ENCODE measurements at regions of chr6 and their contacts with region 1.

Region 1: DNA sequence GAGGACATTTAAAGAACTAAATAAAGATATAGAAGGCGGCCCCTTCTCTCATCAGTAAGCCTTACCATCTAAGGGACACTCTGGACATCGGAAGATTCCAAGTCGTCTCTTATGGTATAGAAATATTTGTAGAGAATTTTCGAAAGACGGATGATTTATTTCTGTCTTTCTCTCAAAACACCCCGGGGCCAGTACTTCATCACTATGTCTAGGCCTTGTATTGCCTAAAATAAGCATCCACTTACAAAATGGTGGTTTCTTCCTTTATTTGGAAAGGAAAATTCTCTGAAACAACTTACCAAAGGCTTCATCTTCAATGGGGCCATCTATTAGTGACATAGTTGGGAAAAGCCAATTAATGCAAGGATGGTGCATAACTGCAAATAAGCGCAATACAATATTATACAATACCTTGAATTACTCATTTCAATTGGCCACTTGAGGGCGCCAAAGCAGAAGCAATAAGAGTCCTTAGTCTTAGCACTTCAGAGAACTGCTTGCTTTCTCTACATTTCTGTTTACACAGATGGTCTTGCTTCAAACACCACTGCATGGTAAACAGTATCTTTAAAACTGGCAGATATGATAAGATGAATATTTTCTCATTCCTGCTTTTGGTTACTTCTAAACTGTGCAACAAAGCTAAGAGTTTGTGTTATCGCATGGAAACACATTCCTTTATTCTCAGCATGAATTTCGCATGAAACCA is 113.2 kb downstream of the VIP start:
- DNase-seq: peak in 4 of 5 donors; percentile 35 to 66 (median 62)
- ATAC-seq: peak in 3 of 4 donors; percentile 69 to 87 (median 79)
- H3K4me3 ChIP-seq: no peak overlapping the region
- H3K27ac ChIP-seq: no peak overlapping the region
- H3K4me1 ChIP-seq: no peaks in the 10 kb centered on the region
- H3K27me3 ChIP-seq: no peaks in the 10 kb centered on the region
- CTCF ChIP-seq: peak; percentile 56 to 81 (median 68)
- POLR2A ChIP-seq: no peak

Region 2: GRCh38 chr6:152669895-152670294 is 193.9 kb before region 1 on chr6:
- intact Hi-C with region 1: no loop called
- DNase-seq: no peak
- ATAC-seq: no peak
- H3K4me3 ChIP-seq: no peak overlapping the region
- H3K27ac ChIP-seq: no peak overlapping the region
- H3K4me1 ChIP-seq: peaks cover 0 to 6% (median 0%) of the 10 kb centered on the region in 12 donors
- H3K27me3 ChIP-seq: no peaks in the 10 kb centered on the region
- CTCF ChIP-seq: peak in 10 of 12 donors; percentile 7 to 60 (median 41)
- POLR2A ChIP-seq: no peak

Region 3: DNA sequence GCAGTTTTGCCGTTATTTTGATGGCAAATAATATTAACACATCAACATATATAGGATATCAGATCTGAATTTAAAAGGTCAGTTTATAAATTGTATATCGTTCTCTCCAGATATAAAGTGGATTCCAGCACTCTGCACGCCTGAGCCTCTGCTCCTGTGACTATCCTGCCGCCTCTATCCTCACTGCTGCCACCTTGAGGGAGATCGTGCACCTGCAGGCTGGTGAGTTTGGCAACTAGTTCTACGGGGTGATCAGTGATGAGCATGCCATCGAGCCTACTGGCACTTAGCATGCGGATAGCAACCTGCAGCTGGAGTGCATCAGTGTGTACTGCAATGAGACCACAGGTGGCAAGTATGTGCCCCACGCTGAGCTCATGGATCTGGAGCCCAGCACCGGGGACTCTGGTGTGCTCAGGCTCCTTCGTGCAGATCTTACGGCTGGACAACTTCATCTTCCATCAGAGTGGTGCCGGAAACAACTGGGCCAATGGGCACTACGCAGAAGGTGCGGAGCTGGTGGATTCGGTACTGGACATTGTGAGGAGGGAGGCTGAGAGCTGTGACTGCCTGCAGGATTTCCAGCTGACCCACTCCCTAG is 34.1 kb after region 1 on chr6:
- intact Hi-C with region 1: loop called in 1 of 10 experiments (anchors 1 kb)
- DNase-seq: peak; percentile 23 to 76 (median 51)
- ATAC-seq: peak in 3 of 4 donors; percentile 52 to 84 (median 78)
- H3K4me3 ChIP-seq: no peak overlapping the region
- H3K27ac ChIP-seq: no peak overlapping the region
- H3K4me1 ChIP-seq: no peaks in the 10 kb centered on the region
- H3K27me3 ChIP-seq: peaks cover 0 to 6% (median 0%) of the 10 kb centered on the region in 9 donors
- CTCF ChIP-seq: peak; percentile 63 to 84 (median 81)
- POLR2A ChIP-seq: no peak

Region 4: DNA sequence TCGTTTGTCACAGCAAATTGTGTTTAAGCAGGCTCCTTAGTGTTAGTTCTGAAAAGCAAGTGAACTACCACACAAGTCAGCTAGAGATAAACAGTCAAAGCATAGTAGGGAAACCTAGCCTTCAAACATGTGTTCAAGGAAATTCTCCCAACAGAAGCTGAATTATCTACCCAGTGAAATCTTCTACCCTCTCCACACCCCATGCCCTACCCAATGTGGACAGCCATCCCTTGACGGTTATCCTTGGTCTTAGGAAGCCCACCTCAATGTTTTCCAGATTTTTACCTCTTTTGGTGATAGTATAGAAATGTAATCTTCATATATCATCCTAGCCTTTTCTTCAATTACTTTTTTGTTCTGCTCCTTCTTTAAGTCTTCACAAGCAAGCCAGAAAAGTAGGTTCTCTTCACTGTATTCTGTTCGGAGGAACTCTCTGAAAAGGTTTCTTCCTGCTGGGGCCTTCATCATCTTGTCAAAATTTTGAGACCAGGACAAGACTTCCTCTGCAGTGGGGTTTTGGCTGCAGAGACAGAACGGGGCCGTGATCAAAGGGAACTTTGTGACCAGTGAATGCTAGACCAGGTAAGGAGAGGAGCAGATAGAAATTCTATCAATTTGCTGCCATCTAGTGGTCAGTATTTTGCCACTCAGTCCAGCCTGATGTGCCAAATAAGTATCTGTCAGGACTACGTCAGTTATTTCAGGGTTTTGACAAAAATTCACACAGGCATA is 160.4 kb after region 1 on chr6:
- intact Hi-C with region 1: loop called (anchors 2 to 10 kb)
- DNase-seq: peak in 2 of 5 donors; percentile 12 to 18
- ATAC-seq: peak; percentile 61 to 82 (median 70)
- H3K4me3 ChIP-seq: no peak overlapping the region
- H3K27ac ChIP-seq: no peak overlapping the region
- H3K4me1 ChIP-seq: peaks cover 0 to 4% (median 0%) of the 10 kb centered on the region in 12 donors
- H3K27me3 ChIP-seq: no peaks in the 10 kb centered on the region
- CTCF ChIP-seq: peak; percentile 74 to 88 (median 79)
- POLR2A ChIP-seq: no peak

Region 5: DNA sequence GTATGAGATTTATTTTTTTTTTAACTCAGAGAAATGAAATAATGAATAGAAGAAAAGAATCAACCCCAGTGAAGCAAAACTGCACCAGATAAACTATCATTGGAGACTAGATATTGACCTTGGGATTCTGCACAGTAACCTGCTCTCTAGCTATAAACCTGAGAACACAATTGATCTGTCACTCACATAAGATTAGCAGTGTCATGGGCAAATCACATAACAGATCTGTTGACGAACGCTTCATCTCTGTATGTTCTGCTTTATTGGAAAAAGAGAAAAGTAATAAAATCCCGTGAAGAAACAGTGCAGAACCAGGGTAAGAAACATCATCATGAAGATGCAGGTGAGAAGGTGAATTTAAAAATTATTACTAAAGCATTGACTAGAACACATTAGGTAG is 320.2 kb after region 1 on chr6:
- intact Hi-C with region 1: no loop called
- DNase-seq: no peak
- ATAC-seq: no peak
- H3K4me3 ChIP-seq: no peak overlapping the region
- H3K27ac ChIP-seq: no peak overlapping the region
- H3K4me1 ChIP-seq: no peaks in the 10 kb centered on the region
- H3K27me3 ChIP-seq: no peaks in the 10 kb centered on the region
- CTCF ChIP-seq: no peak
- POLR2A ChIP-seq: no peak